ENCODE measurements at regions of chr12 and their contacts with region 1.

Region 1: DNA sequence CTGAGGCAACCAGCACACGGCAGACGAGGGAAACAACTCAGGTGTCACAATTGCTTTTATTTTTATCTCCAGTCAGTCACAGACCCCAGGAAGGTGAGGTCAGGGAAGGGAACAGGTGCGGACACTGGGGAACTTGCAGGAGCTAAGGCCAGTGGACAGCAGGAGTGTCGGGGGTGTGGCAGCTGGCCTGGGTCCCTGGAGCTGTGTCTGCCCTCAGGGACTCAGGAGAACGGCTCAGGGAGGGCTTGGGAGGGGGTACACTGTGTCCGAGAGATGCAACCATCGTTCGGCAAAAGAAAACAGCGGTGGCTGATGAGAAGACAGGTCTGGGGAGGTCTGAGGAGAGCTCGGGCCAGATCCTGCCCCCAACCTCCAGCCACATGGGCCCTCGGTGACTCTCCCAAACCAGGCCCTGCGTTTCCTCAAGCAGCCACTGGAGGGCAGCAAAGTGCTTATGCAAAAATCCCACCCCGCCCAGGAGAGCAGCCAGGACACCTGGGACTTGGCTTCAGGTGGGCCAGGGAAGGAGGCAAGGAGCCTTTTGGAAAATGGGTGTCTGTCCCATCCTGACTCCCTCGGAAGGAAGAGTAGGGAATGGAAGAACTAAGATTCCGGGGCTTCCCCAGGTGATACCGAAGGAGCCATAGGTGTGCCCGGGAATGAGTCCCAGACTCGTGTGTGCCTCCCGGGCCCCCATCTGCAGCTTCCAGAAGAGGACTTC is 24.1 kb upstream of the BCDIN3D start:
- DNase-seq: peak; percentile 52
- ATAC-seq: peak; percentile 97
- H3K4me3 ChIP-seq: no peak overlapping the region
- H3K27ac ChIP-seq: no peak overlapping the region
- H3K4me1 ChIP-seq: peaks cover 0 to 11% of the 10 kb centered on the region in 2 experiments; a peak in 1 of 4 replicates
- H3K27me3 ChIP-seq: no peaks in the 10 kb centered on the region
- CTCF ChIP-seq: peak; percentile 82 to 99 (median 97)
- POLR2A ChIP-seq: no peak
- RAD21 ChIP-seq: peak; percentile 92

Region 2: GRCh38 chr12:49811136-49811535 is 55.9 kb before region 1 on chr12:
- CTCF ChIA-PET with region 1: no interaction called
- POLR2A ChIA-PET with region 1: no interaction called
- RAD21 ChIA-PET with region 1: no interaction called
- intact Hi-C with region 1: no loop called
- DNase-seq: no peak
- ATAC-seq: no peak
- H3K4me3 ChIP-seq: no peak overlapping the region
- H3K27ac ChIP-seq: no peak overlapping the region
- H3K4me1 ChIP-seq: no peaks in the 10 kb centered on the region
- H3K27me3 ChIP-seq: no peaks in the 10 kb centered on the region
- CTCF ChIP-seq: no peak
- POLR2A ChIP-seq: no peak
- RAD21 ChIP-seq: no peak

Region 3: GRCh38 chr12:50055831-50056638 is 189.0 kb after region 1 on chr12:
- CTCF ChIA-PET with region 1: interaction called, 13 read pairs
- POLR2A ChIA-PET with region 1: interaction called, 3 read pairs
- RAD21 ChIA-PET with region 1: no interaction called
- intact Hi-C with region 1: loop called (anchors 5 kb)
- DNase-seq: peak; percentile 48
- ATAC-seq: peak; percentile 61
- H3K4me3 ChIP-seq: no peak overlapping the region
- H3K27ac ChIP-seq: no peak overlapping the region; the same call in 1 of the 2 replicates
- H3K4me1 ChIP-seq: peaks cover 15 to 25% of the 10 kb centered on the region in 2 experiments; a peak in 3 of 4 replicates
- H3K27me3 ChIP-seq: no peaks in the 10 kb centered on the region; the same call in 1 of the 2 replicates
- CTCF ChIP-seq: peak; percentile 91 to 98 (median 96)
- POLR2A ChIP-seq: no peak
- RAD21 ChIP-seq: peak; percentile 90

Region 4: DNA sequence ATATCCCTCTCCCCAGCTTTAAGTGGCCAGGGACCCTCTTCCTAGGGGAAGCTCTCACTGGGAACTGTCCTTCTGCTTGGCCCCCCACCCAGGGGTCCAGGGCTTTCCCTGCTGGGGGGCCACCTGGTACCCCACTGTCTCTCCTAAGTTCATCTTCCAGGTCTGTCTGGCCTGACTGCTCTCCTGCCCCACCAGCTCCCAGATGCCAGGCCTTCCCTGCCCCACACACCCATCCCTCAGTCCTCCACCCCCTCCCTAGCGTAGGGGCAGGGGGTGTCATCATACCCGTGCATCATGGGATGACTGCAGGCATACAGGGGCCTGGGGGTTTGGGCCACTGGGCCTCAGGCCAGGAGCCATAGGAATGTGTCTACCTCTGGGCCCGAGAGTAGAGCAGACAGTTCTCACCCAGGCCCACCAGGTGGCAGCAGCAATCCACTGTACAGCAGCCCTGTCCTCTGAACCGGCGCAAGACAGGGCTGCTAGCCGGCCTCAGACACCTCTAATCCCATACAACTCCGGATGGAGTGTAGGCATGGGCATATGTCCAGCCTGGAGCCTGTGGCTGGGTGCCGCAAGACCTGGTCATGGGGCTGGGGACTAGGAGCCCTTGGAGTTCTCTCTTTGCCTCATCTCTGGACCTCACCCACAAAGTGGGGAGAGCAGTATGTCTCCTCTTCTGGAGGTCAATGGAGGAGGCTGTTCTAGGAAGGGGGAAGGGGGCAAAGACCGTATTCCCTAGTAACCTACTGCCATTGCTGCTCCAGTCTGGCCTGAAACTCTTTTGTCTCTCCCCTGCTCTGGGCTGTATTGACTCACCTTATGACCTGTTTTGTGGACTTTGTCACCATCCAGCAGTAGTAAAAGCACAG is 208.2 kb after region 1 on chr12:
- CTCF ChIA-PET with region 1: interaction called, 26 read pairs
- POLR2A ChIA-PET with region 1: no interaction called
- RAD21 ChIA-PET with region 1: interaction called, 3 to 9 read pairs
- intact Hi-C with region 1: no loop called
- DNase-seq: peak; percentile 42
- ATAC-seq: peak; percentile 95
- H3K4me3 ChIP-seq: no peak overlapping the region
- H3K27ac ChIP-seq: no peak overlapping the region
- H3K4me1 ChIP-seq: peaks cover 0 to 14% of the 10 kb centered on the region in 2 experiments; a peak in 1 of 4 replicates
- H3K27me3 ChIP-seq: no peaks in the 10 kb centered on the region
- CTCF ChIP-seq: peak; percentile 81 to 93 (median 91)
- POLR2A ChIP-seq: no peak
- RAD21 ChIP-seq: peak; percentile 97